Calu3 (cell line): ENCODE measurements at regions of chr4 and their contacts with region 1.

Region 1: GRCh38 chr4:70225824-70226223 is at the start of gene FDCSP:
- DNase-seq: no peak
- H3K4me3 Mint-ChIP-seq: peak within 1 kb of the TSS; percentile 78
- H3K27ac Mint-ChIP-seq: peak within 1 kb of the TSS; percentile 91
- H3K4me1 Mint-ChIP-seq: peaks cover 13% of the 10 kb centered on the region
- H3K27me3 Mint-ChIP-seq: no peaks in the 10 kb centered on the region
- CTCF ChIP-seq: no peak
- total RNA-seq, gene FDCSP: 1,542 and 2,729 TPM in 2 replicates

Region 2: DNA sequence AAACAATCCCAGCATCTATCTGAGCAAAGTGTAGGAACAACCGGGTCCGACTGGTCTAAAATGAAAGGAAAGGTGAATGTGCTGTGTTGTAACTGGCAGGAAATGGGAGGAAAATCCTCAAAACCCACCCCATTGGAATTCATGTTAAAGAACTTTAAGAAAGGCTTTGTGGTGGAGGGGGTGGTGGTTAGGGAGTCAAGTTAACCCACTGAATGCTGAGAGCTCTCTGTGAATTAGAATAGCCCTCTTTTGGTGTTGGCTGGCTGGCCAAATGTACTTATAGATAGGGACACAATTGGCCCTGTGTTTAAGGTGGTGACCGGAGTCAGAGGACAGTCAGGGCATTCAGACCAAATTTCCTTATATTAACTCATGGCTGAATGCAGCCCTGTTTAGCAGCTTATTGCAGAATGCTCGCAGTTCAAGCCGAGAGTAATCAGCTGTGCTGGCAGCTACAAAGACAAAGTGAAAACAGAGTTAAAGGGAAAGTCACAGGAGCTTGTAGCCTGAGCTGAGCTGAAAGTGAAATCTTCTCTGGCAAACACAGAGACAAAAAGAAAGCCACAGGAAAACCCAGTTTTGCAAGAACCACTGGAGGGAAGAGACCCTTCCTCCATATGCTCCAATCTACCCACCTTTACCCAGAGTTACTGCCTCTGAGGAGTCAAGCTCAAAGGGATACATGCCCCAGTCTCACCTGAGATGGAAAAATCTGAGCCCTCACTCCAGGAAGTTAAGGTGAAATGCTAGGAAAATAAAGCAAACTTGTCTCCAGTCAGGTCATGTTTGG is 1168.0 kb before region 1 on chr4:
- CTCF ChIA-PET with region 1: no interaction called
- intact Hi-C with region 1: loop called (anchors 10 kb)
- DNase-seq: peak; percentile 52
- H3K4me3 Mint-ChIP-seq: peak overlapping the region; percentile 24
- H3K27ac Mint-ChIP-seq: peak overlapping the region; percentile 90
- H3K4me1 Mint-ChIP-seq: peaks cover 24% of the 10 kb centered on the region
- H3K27me3 Mint-ChIP-seq: no peaks in the 10 kb centered on the region
- CTCF ChIP-seq: no peak

Region 3: DNA sequence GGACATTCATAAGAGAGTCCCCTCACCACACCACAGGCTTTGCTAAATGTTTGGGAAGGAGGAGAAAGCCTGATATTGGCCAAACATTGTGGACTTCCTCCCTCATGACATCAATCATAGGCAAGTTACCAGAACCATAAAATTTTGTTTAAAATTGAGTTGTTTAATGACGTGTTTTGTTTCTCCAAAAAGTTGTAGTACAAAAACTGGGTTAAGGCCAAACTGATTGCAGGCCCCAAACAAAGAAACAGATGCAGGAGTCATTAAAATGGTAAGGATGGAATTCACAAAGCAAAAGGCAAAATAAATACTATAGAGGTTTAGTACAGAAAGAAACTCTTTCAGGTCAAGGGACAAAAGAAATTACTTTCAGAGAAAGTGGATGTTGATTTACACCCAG is 34.2 kb before region 1 on chr4:
- CTCF ChIA-PET with region 1: interaction called, 9 read pairs
- intact Hi-C with region 1: loop called (anchors 2 kb)
- DNase-seq: no peak
- H3K4me3 Mint-ChIP-seq: no peak overlapping the region
- H3K27ac Mint-ChIP-seq: peak overlapping the region; percentile 91
- H3K4me1 Mint-ChIP-seq: peaks cover 23% of the 10 kb centered on the region
- H3K27me3 Mint-ChIP-seq: no peaks in the 10 kb centered on the region
- CTCF ChIP-seq: no peak

Region 4: DNA sequence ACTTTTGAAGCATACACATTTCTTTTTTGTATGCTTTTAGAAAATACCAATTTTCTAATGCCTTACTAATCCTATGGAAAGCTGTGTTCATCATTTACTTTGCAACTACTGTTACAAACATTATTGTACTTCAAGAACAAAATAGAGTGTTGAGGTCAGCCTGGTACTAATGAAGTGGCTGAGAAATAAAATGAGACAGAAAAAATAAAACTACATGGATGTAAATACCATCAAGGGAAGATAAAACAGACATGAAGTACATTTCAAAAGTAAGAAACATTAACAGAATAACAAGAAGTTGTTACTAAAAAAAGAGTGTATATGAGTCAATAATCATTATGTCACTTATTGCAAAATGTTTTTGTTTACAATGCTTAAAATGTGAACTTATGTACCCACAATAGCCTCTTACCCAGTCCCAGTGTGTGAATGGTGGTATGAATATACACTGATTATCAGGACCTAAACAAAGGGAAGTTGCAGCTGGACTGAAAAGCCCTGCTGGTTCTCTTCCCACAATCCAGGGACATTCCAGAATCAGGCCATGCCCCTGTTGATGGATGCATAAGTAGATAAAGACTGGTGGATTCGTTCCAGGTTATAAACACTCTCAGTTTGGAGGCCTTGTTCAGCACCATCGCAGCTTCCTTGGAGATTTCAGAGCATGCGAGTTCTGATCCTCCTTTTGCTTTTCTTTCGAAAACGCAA is 14.2 kb after region 1 on chr4:
- CTCF ChIA-PET with region 1: no interaction called
- intact Hi-C with region 1: loop called (anchors 2 kb)
- DNase-seq: no peak
- H3K4me3 Mint-ChIP-seq: no peak overlapping the region
- H3K27ac Mint-ChIP-seq: peak overlapping the region; percentile 54
- H3K4me1 Mint-ChIP-seq: peaks cover 25% of the 10 kb centered on the region
- H3K27me3 Mint-ChIP-seq: no peaks in the 10 kb centered on the region
- CTCF ChIP-seq: no peak